ENCODE measurements at regions of chr13 and their contacts with region 1.

Region 1: DNA sequence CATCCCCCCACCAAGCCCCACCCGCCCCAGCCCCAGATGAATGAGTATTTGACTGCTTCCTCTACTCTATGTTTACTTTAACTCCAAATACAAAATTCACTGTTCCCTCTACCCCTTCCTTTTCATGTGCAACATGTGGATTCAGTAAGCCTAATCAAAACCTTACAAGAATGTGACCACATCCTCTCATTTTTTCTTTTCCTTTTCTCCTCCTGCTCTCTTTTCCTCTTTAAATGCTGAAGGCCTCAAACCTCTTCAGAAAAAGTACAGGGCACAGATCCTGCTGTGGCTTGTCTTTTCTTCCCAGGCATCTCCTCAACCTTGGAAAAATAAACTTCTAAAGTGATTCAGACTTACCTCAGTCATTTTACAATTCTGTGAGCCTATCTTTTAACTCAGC is 119.0 kb downstream of the MYCBP2 start:
- DNase-seq: no peak
- H3K4me3 ChIP-seq: no peak overlapping the region
- H3K27ac ChIP-seq: no peak overlapping the region
- H3K4me1 ChIP-seq: no peaks in the 10 kb centered on the region
- CTCF ChIP-seq: no peak

Region 2: DNA sequence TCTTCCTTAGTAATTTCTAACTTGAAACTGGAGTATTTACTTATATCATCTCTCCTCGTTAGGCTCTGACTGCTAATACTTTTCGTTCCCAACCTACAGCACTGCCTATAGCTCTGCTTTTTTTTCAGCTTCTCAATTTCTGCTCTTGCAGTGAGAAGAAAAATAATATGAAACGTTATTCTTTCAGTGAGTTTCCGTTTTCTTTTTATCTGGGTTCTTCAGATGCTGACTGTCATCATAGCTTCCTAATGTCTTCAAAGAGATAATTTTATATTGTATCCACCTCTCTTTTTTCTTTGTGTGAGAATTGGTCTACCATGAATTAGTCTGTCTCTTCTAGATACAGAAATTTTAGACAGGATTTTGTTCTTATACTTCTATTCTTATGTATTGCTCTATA is 1116.9 kb before region 1 on chr13:
- CTCF ChIA-PET with region 1: no interaction called
- POLR2A ChIA-PET with region 1: no interaction called
- intact Hi-C with region 1: no loop called
- DNase-seq: no peak
- H3K4me3 ChIP-seq: no peak overlapping the region
- H3K27ac ChIP-seq: no peak overlapping the region
- H3K4me1 ChIP-seq: no peaks in the 10 kb centered on the region
- CTCF ChIP-seq: no peak

Region 3: GRCh38 chr13:77250975-77251374 is 43.0 kb after region 1 on chr13:
- CTCF ChIA-PET with region 1: no interaction called
- POLR2A ChIA-PET with region 1: no interaction called
- intact Hi-C with region 1: loop called (anchors 5 kb)
- DNase-seq: no peak
- H3K4me3 ChIP-seq: no peak overlapping the region
- H3K27ac ChIP-seq: no peak overlapping the region
- H3K4me1 ChIP-seq: no peaks in the 10 kb centered on the region
- CTCF ChIP-seq: no peak